ENCODE measurements at regions of chr22 and their contacts with region 1.

Region 1: GRCh38 chr22:50314455-50315288 is 7.2 kb upstream of the PLXNB2 start:
- DNase-seq: peak in 2 of 3 donors; percentile 79 to 84
- ATAC-seq: peak; percentile 5 to 41
- H3K4me3 ChIP-seq: no peak overlapping the region
- H3K27ac ChIP-seq: no peak overlapping the region
- H3K4me1 ChIP-seq: no peaks in the 10 kb centered on the region
- H3K27me3 ChIP-seq: no peaks in the 10 kb centered on the region

Region 2: DNA sequence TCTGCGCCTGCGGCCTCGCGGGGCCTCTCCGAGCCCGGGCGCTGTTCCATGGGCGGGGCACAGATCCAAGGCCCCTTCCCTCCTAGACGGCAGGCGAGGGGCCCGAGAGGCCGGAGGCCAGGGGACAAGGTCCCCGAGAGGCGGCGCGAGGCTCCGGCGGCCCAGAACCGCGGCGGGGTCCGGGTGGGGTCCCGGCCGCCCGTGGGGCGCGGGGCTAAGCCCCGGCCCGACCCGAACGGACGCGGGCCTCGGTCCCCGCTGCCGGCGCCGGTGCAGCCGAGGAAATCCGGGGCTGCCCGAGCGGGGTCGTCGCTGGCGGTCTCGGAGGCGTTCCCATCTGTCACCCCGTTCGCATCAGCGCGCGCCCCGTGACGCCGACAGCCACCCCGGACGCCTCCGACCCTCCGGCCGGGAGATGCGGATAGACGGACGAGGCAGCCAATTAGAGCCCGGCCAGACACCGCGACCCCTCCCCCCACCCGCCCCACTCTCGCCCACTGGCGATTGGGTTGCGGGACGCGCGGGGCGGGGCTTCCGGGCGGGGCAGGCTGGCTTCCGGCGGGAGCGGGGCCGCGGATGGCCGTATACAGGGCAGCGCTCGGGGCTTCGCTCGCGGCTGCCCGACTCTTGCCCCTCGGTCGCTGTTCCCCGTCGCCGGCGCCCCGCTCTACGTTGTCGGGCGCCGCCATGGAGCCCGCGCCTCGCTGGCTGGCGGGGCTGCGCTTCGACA is 114.0 kb before region 1 on chr22 and contains the start of gene SELENOO:
- intact Hi-C with region 1: no loop called
- DNase-seq: peak; percentile 93 to 97 (median 97)
- ATAC-seq: peak; percentile 88 to 89
- H3K4me3 ChIP-seq: peak within 1 kb of the TSS; percentile 92
- H3K27ac ChIP-seq: peak within 1 kb of the TSS; percentile 76
- H3K4me1 ChIP-seq: peaks cover 2% of the 10 kb centered on the region
- H3K27me3 ChIP-seq: no peaks in the 10 kb centered on the region
- total RNA-seq, gene SELENOO: 14.6 to 16.3 (median 15.3) TPM

Region 3: GRCh38 chr22:50276143-50276542 is 38.5 kb before region 1 on chr22:
- intact Hi-C with region 1: loop called in 1 of 4 experiments (anchors 5 kb)
- DNase-seq: peak; percentile 67 to 90 (median 88)
- ATAC-seq: peak; percentile 73 to 82
- H3K4me3 ChIP-seq: no peak overlapping the region
- H3K27ac ChIP-seq: no peak overlapping the region
- H3K4me1 ChIP-seq: no peaks in the 10 kb centered on the region
- H3K27me3 ChIP-seq: no peaks in the 10 kb centered on the region